ENCODE measurements at regions of chr10 and their contacts with region 1.

Region 1: GRCh38 chr10:119080521-119081260 is at the start of gene EIF3A:
- DNase-seq: peak; percentile 94
- H3K4me3 Mint-ChIP-seq: peak within 1 kb of the TSS; percentile 93
- H3K27ac Mint-ChIP-seq: peak within 1 kb of the TSS; percentile 93
- H3K4me1 Mint-ChIP-seq: peaks cover 35% of the 10 kb centered on the region
- H3K27me3 Mint-ChIP-seq: no peaks in the 10 kb centered on the region
- total RNA-seq, gene EIF3A: 161 and 164 TPM in 2 replicates

Region 2: GRCh38 chr10:119030421-119031250 is 50.1 kb before region 1 on chr10:
- intact Hi-C with region 1: loop called (anchors 2 kb)
- DNase-seq: peak; percentile 57
- H3K4me3 Mint-ChIP-seq: peak overlapping the region; percentile 61
- H3K27ac Mint-ChIP-seq: no peak overlapping the region
- H3K4me1 Mint-ChIP-seq: peaks cover 13% of the 10 kb centered on the region
- H3K27me3 Mint-ChIP-seq: peaks cover 15% of the 10 kb centered on the region

Region 3: DNA sequence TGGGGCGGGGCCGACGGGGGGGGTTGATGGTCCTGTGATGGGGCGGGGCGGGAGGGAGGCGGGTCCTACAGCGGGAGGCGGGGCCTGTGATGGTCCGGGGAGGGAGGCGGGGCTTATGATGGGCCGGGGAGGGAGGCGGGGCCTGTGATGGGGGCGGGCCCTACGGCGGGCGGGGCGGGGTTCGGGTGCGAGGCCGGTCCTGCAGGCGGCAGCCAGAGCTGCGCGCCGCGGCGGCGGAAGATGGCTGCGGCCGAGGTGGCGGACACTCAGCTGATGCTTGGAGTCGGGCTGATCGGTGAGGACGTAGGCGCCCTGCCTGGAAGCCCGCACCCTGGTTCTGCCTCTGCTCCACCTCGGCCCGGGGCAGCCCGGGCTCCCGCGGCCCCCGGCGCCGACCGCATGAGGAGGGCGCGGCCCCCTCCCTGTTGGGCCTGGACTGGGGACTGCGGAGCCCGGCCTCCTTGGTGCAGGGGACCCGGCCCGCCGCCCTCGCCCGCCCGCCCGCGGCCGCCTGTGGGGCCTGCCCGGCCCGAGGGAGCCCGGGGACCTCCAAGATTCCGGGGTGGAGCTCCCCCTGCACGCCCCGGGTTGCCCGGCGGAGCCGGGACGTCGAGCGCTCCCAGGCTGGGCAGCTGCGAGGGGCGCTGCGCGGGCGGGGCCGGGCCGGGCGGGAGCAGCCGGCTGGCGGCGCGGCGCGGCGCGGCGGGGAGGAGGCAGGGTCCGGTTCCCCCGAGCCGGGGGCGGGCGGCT is 23.4 kb after region 1 on chr10 and contains the start of gene DENND10:
- intact Hi-C with region 1: loop called (anchors 1 kb)
- DNase-seq: peak; percentile 67
- H3K4me3 Mint-ChIP-seq: peak within 1 kb of the TSS; percentile 86
- H3K27ac Mint-ChIP-seq: peak within 1 kb of the TSS; percentile 31
- H3K4me1 Mint-ChIP-seq: peaks cover 33% of the 10 kb centered on the region
- H3K27me3 Mint-ChIP-seq: no peaks in the 10 kb centered on the region
- total RNA-seq, gene DENND10: 26.0 and 26.2 TPM in 2 replicates

Region 4: GRCh38 chr10:119131512-119132240 is 51.0 kb after region 1 on chr10:
- intact Hi-C with region 1: loop called (anchors 1 kb)
- DNase-seq: peak; percentile 60
- H3K4me3 Mint-ChIP-seq: peak overlapping the region; percentile 82
- H3K27ac Mint-ChIP-seq: peak overlapping the region; percentile 94
- H3K4me1 Mint-ChIP-seq: peaks cover 62% of the 10 kb centered on the region
- H3K27me3 Mint-ChIP-seq: no peaks in the 10 kb centered on the region

Region 5: DNA sequence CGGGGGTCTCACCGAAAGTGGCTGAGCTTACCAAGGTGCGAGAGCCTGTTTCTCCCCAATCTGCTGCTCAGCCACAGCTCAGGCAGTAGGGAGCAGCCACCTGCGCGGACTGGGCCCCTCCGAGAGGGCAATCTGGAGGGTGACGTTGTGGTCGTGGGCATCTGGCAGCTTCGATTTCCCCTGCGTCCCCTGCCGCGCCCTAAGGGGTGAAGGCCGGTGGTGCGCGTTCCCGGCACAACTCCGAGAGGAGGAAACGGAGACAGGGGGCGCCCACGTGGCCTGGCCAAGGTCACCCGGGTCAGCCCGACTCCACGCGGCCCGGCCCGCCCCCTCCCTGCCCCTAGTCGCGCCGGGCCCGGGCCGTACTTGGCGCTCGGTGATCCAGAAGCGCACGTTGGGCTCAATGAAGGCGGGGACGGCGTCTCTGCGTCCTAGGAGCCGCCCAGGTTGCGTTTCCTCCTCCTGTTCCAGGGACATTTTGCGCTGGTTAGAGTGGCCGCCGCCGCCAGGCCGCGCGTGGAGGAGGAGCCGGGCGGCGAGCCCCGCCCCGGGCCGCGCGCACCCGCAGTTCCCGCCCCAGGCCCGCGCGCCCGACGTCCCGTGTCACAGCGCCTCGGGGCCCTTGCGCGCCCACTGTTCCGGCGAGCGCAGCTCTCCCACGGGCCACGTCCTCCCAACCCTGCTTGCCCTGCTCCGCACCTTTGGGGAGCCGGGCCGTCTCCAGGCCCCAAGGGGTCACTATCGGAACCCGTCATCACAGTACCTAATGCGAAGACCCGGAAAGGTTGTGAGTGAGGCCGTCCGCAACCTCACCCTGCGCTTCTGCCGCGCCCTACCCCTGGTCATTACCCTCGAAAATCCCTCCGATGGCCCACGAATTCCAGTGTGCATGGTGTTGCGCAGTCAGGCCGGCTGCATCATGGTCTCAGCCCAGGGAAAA is 84.8 kb after region 1 on chr10 and contains the start of gene SFXN4:
- intact Hi-C with region 1: loop called (anchors 2 kb)
- DNase-seq: peak; percentile 81
- H3K4me3 Mint-ChIP-seq: peak within 1 kb of the TSS; percentile 85
- H3K27ac Mint-ChIP-seq: peak within 1 kb of the TSS; percentile 93
- H3K4me1 Mint-ChIP-seq: peaks cover 37% of the 10 kb centered on the region
- H3K27me3 Mint-ChIP-seq: no peaks in the 10 kb centered on the region
- total RNA-seq, gene SFXN4: 43.5 and 44.8 TPM in 2 replicates

Region 6: GRCh38 chr10:119178372-119179119 is 97.9 kb after region 1 on chr10 and contains the start of gene PRDX3:
- intact Hi-C with region 1: loop called (anchors 1 kb)
- DNase-seq: peak; percentile 89
- H3K4me3 Mint-ChIP-seq: peak within 1 kb of the TSS; percentile 97
- H3K27ac Mint-ChIP-seq: peak within 1 kb of the TSS; percentile 99
- H3K4me1 Mint-ChIP-seq: peaks cover 27% of the 10 kb centered on the region
- H3K27me3 Mint-ChIP-seq: no peaks in the 10 kb centered on the region
- total RNA-seq, gene PRDX3: 177 and 182 TPM in 2 replicates

Measured in activated T-helper 2 cell treated with anti-CD3 and anti-CD28 coated beads, Interferon-gamma antibody, Interleukin-2, Interleukin-4, amounts not matched to agents 10 μg/mL and 5 μg/mL and 100 μg/mL, durations not matched to agents 14 hours and 24 hours and 36 hours (primary cell).